A673 (cell line): ENCODE measurements at regions of chr3 and their contacts with region 1.

Region 1: DNA sequence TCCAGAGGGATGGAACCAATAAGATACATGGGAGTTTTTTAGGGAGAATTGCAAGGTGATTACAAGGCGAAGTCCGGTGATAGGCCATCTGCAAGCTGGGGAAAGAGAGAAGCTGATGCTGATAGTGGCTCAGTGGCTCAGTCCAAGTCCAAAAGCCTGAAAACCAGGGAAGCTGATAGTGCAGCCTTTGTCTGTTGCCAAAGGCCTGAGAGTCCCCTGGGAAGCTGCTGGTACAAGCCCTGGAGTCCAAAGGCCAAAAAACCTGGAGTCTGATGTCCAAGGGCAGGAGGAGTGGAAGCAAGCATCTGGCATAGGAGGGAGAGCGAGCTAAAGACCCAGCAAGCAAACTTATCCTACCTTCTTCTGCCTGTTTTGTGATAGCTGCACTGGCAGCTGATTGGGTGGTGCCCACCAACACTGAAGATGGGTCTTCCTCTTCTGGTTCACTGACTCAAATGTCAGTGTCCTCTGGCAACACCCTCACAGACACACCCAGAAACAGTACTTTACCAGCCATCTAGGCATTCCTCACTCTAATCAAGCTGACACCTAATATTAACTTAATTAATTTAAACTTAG is 16.7 kb downstream of the TFG start:
- DNase-seq: no peak
- H3K4me3 ChIP-seq: no peak overlapping the region
- H3K27ac ChIP-seq: no peak overlapping the region
- H3K4me1 ChIP-seq: no peaks in the 10 kb centered on the region
- H3K27me3 ChIP-seq: no peaks in the 10 kb centered on the region
- CTCF ChIP-seq: no peak

Region 2: DNA sequence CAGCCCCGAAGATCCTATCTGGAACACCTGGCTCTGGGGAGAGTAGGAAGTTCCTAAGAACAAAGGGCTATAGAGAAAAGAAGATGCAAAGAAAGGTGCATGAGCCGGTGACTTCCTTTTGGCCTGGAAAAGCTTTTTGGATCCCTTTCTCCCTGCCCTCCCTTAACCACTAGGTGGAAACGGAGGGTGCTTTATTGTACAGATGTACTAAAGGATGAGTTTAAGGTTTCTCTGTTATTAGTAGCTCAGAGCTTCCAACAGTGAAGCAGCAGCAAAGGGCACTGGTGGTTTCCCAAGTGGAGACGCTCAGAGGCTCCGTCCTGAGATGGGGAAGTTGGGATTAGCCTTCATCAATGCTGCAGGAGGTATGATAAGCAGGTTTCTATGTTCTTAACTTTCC is 122.6 kb before region 1 on chr3:
- CTCF ChIA-PET with region 1: no interaction called
- POLR2A ChIA-PET with region 1: no interaction called
- intact Hi-C with region 1: loop called (anchors 5 kb)
- DNase-seq: peak; percentile 72
- H3K4me3 ChIP-seq: peak overlapping the region; percentile 12
- H3K27ac ChIP-seq: no peak overlapping the region
- H3K4me1 ChIP-seq: peaks cover 34% of the 10 kb centered on the region
- H3K27me3 ChIP-seq: no peaks in the 10 kb centered on the region
- CTCF ChIP-seq: peak; percentile 59

Region 3: GRCh38 chr3:101195951-101196713 is 470.1 kb after region 1 on chr3:
- CTCF ChIA-PET with region 1: no interaction called
- POLR2A ChIA-PET with region 1: no interaction called
- intact Hi-C with region 1: no loop called
- DNase-seq: peak; percentile 82
- H3K4me3 ChIP-seq: no peak overlapping the region
- H3K27ac ChIP-seq: peak overlapping the region; percentile 35
- H3K4me1 ChIP-seq: peaks cover 31% of the 10 kb centered on the region
- H3K27me3 ChIP-seq: no peaks in the 10 kb centered on the region
- CTCF ChIP-seq: peak; percentile 68